Activated CD8-positive, alpha-beta T cell treated with anti-CD3 and anti-CD28 coated beads, Interleukin-2, amount 10 ng/mL, durations not matched to agents 7 days and 5 days (primary cell): ENCODE measurements at regions of chr6 and their contacts with region 1.

Region 1: DNA sequence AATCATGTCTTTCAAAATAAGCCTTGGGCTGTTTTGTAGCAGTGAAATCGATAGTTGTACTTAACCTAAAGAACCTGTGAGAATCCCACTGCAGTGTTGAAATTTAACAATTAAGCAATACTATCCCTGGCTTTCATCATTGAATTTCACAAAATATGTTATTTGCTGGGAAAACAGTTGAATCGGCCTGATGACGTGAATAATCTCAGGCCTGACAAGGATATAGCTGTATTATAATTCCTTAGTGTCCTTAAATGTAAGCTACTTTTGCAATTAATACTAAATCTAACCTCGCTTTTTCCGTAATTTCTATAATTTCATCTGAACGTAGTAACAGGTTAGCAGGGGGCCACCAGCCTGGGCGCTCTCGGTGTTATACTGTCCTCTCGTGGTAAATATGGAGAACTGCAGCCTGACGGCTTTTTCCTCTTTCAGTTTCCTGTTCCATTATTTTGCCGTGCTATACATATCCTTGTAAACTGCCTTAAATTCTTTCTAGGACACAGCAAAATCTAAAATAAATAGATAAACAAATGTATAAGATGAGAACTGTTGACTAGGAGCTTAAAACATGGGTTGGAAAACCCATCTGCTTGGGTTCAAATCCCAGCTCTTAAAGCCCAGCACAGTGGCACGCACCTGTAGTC is 24.0 kb downstream of the MTFR2 start:
- DNase-seq: peak; percentile 70
- ATAC-seq: peak; percentile 82
- H3K4me3 Mint-ChIP-seq: no peak overlapping the region
- H3K27ac Mint-ChIP-seq: no peak overlapping the region
- H3K4me1 Mint-ChIP-seq: peaks cover 8% of the 10 kb centered on the region
- H3K27me3 Mint-ChIP-seq: no peaks in the 10 kb centered on the region

Region 2: DNA sequence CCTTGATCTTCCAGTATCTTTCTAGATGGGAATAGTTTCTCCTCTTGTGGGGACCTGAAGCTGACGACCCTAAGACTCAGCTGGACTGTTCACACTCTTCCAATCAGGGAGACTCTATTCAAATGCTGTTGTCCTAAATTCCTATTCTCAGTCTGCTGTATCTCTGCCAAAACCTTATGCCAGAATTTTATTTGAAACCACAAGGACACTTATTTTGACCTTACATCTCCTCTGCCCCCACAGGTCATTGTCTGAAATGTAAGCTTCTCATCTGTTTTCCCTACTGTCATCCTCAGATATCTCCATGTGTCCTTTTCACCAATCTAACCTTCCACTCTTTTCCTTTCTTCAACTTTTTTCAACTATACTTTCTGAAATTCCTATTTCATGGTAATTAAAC is 1618.7 kb before region 1 on chr6:
- CTCF ChIA-PET with region 1: no interaction called
- POLR2A ChIA-PET with region 1: no interaction called
- DNase-seq: no peak
- ATAC-seq: no peak
- H3K4me3 Mint-ChIP-seq: no peak overlapping the region
- H3K27ac Mint-ChIP-seq: no peak overlapping the region
- H3K4me1 Mint-ChIP-seq: no peaks in the 10 kb centered on the region
- H3K27me3 Mint-ChIP-seq: no peaks in the 10 kb centered on the region

Region 3: DNA sequence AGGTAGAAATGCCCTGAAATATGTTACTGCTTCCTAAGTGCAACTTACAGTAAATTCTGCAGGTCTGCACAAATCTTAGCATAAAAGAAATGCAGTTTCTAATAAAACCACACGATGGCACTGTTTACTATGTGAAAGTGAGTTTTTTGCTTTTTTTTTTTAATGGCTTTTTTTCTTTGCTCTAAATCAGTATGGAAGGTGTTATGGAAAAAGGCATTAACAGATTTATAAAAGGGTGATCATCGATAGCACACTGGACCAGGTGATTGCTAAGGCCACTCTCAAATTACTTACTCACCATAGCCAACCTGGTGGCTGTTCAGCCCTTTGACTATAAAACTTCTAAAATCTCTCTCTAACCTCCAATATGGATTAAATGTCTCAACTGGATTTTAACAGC is 774.5 kb before region 1 on chr6:
- CTCF ChIA-PET with region 1: interaction called, 15 read pairs
- POLR2A ChIA-PET with region 1: no interaction called
- DNase-seq: no peak
- ATAC-seq: peak; percentile 30
- H3K4me3 Mint-ChIP-seq: no peak overlapping the region
- H3K27ac Mint-ChIP-seq: no peak overlapping the region
- H3K4me1 Mint-ChIP-seq: no peaks in the 10 kb centered on the region
- H3K27me3 Mint-ChIP-seq: no peaks in the 10 kb centered on the region

Region 4: DNA sequence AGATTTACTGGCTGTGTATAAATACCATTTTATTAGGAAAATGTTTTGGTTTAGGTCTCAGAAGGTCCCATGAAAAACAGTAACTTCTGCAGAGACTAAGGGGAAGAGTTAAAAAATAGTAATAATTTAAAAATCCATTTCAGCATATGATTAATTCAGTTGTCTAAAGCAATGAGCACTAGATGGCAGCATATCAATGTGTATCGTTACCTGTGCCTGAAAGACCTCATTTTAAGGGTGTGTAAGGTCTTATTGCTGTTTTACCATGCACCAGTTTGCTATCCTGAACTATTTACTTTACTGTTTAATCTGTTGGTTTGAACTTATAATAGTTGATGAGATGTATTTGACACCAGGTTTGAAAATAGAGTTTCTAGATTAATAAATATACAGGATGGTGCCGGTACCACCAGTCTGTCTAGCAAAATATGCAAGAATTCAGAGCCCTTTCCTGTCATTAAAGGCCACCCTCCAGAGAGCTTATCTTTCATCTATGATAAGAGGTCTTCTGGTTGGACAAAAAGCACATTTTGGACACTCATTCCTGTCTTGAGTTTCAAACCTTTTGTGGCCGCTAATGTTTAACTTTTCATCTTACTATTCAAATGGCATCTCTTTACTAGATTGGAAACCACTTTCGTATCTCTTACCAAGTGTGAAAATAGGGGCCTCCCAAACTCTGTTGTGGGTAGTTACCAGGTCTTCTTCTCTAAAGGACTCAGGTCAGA is 719.7 kb before region 1 on chr6:
- CTCF ChIA-PET with region 1: interaction called, 32 read pairs
- POLR2A ChIA-PET with region 1: no interaction called
- DNase-seq: peak; percentile 41
- ATAC-seq: peak; percentile 93
- H3K4me3 Mint-ChIP-seq: no peak overlapping the region
- H3K27ac Mint-ChIP-seq: peak overlapping the region; percentile 26
- H3K4me1 Mint-ChIP-seq: peaks cover 8% of the 10 kb centered on the region
- H3K27me3 Mint-ChIP-seq: no peaks in the 10 kb centered on the region

Region 5: GRCh38 chr6:135675862-135676261 is 550.3 kb before region 1 on chr6:
- CTCF ChIA-PET with region 1: interaction called, 38 read pairs
- POLR2A ChIA-PET with region 1: no interaction called
- DNase-seq: peak; percentile 58
- ATAC-seq: peak; percentile 55
- H3K4me3 Mint-ChIP-seq: no peak overlapping the region
- H3K27ac Mint-ChIP-seq: no peak overlapping the region
- H3K4me1 Mint-ChIP-seq: peaks cover 27% of the 10 kb centered on the region
- H3K27me3 Mint-ChIP-seq: no peaks in the 10 kb centered on the region

Region 6: DNA sequence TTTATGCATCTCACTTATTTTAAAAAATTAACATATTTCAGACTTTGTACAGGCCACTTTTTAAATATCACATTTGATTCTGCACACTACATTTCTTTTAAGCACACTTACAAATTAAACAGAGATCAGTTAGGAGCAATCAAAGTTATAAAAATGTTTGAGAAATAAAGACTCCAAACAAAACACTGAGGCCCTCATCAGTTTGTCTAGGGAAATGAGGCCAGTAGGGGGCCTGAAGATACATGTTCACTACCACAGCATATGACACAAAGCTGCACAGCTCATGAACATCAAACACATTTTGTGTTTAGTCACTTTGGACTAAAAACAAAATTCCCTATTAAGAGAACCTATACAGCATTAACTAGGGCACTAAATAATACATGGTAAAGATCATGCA is 194.2 kb before region 1 on chr6:
- CTCF ChIA-PET with region 1: interaction called, 15 read pairs
- POLR2A ChIA-PET with region 1: no interaction called
- DNase-seq: no peak
- ATAC-seq: no peak
- H3K4me3 Mint-ChIP-seq: no peak overlapping the region
- H3K27ac Mint-ChIP-seq: no peak overlapping the region
- H3K4me1 Mint-ChIP-seq: peaks cover under 1% of the 10 kb centered on the region
- H3K27me3 Mint-ChIP-seq: no peaks in the 10 kb centered on the region

Region 7: DNA sequence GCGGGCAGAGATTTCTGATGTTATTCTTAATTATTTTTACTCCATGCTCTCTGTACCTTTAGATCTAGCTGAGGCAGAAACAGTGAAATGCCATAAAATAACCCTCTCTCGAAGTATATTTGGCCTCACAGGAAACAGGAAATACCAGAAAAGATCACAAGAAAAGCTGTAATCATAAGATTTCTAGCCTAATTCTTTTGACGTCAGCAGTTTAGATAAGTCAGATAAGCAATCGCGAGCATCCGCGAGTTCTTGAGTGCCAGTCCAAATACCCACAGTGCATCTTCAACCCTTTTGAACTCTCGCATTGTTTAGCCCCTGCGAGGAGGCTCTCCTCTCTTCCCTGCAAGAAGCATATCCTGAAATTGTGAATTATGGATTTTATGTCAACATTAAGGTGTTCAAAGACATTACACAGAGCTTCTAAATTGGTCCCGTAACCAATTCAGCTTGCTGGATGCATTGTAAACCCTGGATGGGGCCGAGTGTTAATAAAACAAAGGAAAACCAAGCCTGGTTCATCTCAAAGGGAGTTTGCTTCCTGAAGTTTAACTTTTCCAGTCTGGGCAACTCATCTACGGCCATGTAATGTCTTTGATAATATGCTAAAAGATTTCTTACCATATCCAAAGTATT is 174.9 kb before region 1 on chr6:
- CTCF ChIA-PET with region 1: no interaction called
- POLR2A ChIA-PET with region 1: no interaction called
- DNase-seq: no peak
- ATAC-seq: peak; percentile 33
- H3K4me3 Mint-ChIP-seq: no peak overlapping the region
- H3K27ac Mint-ChIP-seq: no peak overlapping the region
- H3K4me1 Mint-ChIP-seq: peaks cover 12% of the 10 kb centered on the region
- H3K27me3 Mint-ChIP-seq: no peaks in the 10 kb centered on the region

Region 8: DNA sequence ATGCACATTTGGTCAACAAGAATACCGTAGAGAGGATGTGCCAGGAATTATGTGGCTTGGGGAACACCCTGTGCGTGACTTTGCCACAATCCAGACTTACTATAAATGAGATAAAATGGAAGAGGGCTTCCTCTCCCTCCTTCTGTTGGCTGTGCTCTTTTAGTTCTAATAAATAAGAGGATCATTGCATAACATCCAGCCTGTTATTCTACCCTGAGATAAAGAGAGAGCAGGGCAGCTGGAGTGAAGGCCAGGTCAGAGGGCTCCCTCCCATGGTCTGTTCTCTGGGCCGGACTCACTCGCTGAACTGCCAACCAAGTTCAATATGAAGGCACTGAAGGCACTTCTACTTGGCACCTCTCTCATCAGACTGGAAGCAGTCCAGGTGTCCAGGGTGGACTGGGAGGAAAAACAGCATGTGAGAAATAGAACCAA is 67.7 kb before region 1 on chr6:
- CTCF ChIA-PET with region 1: no interaction called
- POLR2A ChIA-PET with region 1: no interaction called
- DNase-seq: no peak
- ATAC-seq: no peak
- H3K4me3 Mint-ChIP-seq: no peak overlapping the region
- H3K27ac Mint-ChIP-seq: no peak overlapping the region
- H3K4me1 Mint-ChIP-seq: no peaks in the 10 kb centered on the region
- H3K27me3 Mint-ChIP-seq: no peaks in the 10 kb centered on the region

Region 9: GRCh38 chr6:136236466-136237293 is 10.5 kb after region 1 on chr6:
- CTCF ChIA-PET with region 1: interaction called, 17 read pairs
- POLR2A ChIA-PET with region 1: no interaction called
- DNase-seq: no peak
- ATAC-seq: no peak
- H3K4me3 Mint-ChIP-seq: no peak overlapping the region
- H3K27ac Mint-ChIP-seq: no peak overlapping the region
- H3K4me1 Mint-ChIP-seq: peaks cover 19% of the 10 kb centered on the region
- H3K27me3 Mint-ChIP-seq: no peaks in the 10 kb centered on the region

Region 10: GRCh38 chr6:136317021-136317694 is 91.0 kb after region 1 on chr6:
- CTCF ChIA-PET with region 1: interaction called, 16 read pairs
- POLR2A ChIA-PET with region 1: no interaction called
- DNase-seq: peak; percentile 77
- ATAC-seq: peak; percentile 90
- H3K4me3 Mint-ChIP-seq: no peak overlapping the region
- H3K27ac Mint-ChIP-seq: no peak overlapping the region
- H3K4me1 Mint-ChIP-seq: peaks cover 4% of the 10 kb centered on the region
- H3K27me3 Mint-ChIP-seq: peaks cover 8% of the 10 kb centered on the region